Ovary (tissue), 10 donors: ENCODE measurements at regions of chr3 and their contacts with region 1.

Region 1: DNA sequence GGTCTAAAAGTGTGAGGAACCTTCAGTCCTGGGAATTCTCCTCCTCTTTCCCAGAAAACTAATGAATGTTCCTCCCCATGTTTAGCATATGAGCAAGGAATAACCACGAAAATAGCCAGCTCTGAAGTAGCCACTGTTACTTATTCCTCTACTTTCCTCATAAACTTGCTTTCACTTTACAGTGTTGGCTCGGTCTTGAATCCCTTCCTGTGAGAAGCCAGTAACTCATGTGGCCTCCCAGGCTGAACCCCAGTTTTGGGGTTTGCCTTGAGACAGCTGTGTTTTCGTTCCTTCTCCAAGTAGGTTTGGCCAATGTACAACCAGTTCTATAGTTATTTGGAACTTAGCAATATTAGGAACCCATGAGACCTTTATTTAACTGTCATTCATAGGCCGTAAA is 195.0 kb downstream of the CNTN6 start:
- DNase-seq: no peak
- H3K4me3 ChIP-seq: no peak overlapping the region
- H3K27ac ChIP-seq: no peak overlapping the region
- H3K4me1 ChIP-seq: no peaks in the 10 kb centered on the region
- H3K27me3 ChIP-seq: no peaks in the 10 kb centered on the region
- CTCF ChIP-seq: no peak
- EP300 ChIP-seq: no peak
- POLR2A ChIP-seq: no peak

Region 2: DNA sequence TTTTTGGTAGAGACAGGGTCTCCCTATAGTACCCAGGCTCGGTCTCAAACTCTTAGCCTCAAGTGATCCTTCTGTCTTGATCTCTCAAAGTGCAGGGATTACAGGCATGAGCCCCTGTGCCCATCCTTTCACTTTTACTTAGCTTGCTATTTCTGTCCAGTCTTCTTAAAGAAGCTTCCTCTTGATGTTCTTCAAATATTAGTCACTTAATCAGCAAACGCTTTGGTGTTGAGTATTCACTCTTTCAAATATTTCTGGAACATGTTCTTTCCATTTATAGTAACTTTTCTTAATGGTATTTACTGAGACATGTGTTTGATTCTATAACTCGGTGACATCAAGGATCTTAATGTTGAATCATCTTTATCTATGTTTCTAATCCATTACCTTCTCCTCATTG is 72.9 kb before region 1 on chr3:
- intact Hi-C with region 1: loop called in 1 of 4 experiments (anchors 2 kb)
- DNase-seq: no peak
- H3K4me3 ChIP-seq: no peak overlapping the region
- H3K27ac ChIP-seq: no peak overlapping the region
- H3K4me1 ChIP-seq: no peaks in the 10 kb centered on the region
- H3K27me3 ChIP-seq: no peaks in the 10 kb centered on the region
- CTCF ChIP-seq: no peak
- EP300 ChIP-seq: no peak
- POLR2A ChIP-seq: no peak

Region 3: DNA sequence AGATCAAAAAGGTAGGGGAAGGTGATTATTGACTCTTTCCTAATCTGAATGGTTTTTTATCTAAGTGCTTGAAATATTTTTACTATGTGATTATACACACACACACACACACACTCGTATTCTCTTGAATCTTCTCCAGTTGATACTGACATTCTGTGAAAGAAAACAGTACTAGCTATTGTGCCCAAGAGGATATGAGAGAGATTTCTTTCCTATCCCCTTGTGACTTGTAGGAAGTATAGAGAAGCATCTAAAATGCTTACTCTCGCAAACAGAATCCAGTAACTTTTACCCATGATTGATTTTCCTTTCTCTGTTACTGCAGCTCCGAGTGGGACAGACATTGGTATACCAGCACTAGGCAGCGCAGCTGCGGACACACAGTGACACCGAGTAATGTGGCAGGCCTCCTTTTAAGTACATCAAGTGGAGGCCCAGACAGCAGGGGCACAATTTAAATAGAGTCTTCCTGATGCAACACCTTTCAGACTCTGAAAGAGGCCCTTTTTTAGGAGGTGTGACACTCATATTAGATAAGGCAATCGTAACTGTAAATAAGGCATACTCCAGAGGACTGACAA is 389.9 kb after region 1 on chr3:
- intact Hi-C with region 1: no loop called
- DNase-seq: no peak
- H3K4me3 ChIP-seq: no peak overlapping the region
- H3K27ac ChIP-seq: no peak overlapping the region
- H3K4me1 ChIP-seq: no peaks in the 10 kb centered on the region
- H3K27me3 ChIP-seq: no peaks in the 10 kb centered on the region
- CTCF ChIP-seq: no peak
- EP300 ChIP-seq: no peak
- POLR2A ChIP-seq: no peak

Region 4: DNA sequence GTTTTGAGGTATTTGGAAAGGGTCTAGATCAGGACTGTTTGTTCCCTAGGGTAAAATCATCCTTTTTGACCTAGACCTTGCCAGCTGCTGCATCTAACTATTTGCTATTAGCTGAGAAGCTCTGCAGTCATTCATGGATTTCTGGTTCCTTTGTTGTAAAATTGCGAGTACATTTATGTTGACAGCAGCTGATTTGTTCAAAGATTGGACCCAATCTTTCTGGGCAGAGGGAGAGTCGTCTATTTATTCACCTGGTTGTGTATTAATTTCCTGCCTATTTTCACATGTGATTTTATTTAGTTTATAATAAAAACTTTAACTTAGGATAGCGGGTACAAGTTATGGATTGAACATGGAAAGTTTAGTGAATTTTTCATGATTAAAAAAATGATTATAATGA is 1047.1 kb after region 1 on chr3:
- intact Hi-C with region 1: no loop called
- DNase-seq: no peak
- H3K4me3 ChIP-seq: no peak overlapping the region
- H3K27ac ChIP-seq: no peak overlapping the region
- H3K4me1 ChIP-seq: no peaks in the 10 kb centered on the region
- H3K27me3 ChIP-seq: no peaks in the 10 kb centered on the region
- CTCF ChIP-seq: no peak
- EP300 ChIP-seq: no peak
- POLR2A ChIP-seq: no peak